Right ventricle myocardium superior (tissue), 1 donor: ENCODE measurements at regions of chr19 and their contacts with region 1.

Region 1: GRCh38 chr19:2543463-2544442 is 67.8 kb downstream of the GADD45B start:
- DNase-seq: peak; percentile 96
- ATAC-seq: peak; percentile 75

Region 2: GRCh38 chr19:2261438-2262172 is 282.1 kb before region 1 on chr19:
- intact Hi-C with region 1: no loop called
- DNase-seq: no peak
- ATAC-seq: no peak

Region 3: DNA sequence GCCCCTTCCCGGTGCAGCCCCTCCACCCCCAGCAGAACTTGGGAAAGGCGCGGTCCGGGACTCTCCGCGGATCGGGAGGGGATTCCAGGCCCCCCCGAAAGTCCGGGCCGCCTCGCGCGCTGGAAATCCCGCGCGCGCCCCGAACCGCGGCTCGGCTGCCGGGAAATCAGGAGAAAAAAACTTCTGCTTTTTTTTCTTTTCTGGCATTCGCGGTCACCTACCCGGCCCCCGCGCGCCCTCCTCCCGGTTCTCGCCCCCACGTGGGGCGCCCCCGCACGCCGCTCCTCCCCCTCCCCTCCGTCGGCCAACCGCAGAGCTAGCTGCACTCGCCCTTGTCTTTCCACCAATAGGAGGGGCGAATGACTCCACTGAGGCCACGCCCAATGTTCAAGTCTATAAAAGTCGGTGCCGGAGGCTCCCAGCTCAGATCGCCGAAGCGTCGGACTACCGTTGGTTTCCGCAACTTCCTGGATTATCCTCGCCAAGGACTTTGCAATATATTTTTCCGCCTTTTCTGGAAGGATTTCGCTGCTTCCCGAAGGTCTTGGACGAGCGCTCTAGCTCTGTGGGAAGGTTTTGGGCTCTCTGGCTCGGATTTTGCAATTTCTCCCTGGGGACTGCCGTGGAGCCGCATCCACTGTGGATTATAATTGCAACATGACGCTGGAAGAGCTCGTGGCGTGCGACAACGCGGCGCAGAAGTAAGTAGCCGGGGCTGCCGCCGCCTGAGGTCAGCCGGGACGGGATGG is 67.9 kb before region 1 on chr19 and contains the start of gene GADD45B:
- intact Hi-C with region 1: loop called (anchors 5 kb)
- DNase-seq: peak; percentile 98
- ATAC-seq: peak; percentile 81
- total RNA-seq, gene GADD45B: 42.1 TPM

Region 4: DNA sequence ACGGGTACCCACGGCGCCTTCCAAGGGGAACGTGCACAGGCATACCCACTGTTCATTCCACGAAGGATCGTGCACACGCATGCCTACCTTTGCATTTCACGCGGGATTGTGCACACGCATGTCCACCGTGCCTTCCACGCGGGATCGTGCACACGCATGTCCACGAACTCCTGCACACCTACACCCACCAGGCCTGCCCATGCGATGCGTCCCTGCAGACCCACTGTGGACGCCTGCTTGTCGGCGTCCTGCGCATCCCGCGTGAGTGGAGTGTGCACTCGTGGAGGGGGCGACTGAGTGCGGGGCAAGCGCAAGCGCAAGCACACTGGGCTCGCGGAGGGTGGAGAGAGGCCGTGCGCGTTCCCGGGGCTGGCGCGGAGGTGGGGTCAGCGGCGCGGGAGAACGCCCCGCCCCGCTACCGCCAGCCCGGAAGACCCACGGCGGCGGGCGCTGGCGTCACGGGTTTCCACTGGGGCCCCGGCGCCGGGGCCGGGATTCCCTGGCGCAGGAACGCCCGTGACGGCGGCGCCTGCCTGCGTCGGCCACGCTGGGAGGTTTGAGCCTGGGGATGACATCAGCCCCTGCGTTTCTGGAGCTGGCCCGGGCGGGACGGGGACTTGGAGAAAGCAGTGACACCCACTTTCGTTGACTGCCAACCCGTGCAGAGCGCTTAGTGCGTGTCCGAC is 49.2 kb before region 1 on chr19:
- intact Hi-C with region 1: loop called (anchors 5 kb)
- DNase-seq: peak; percentile 89
- ATAC-seq: peak; percentile 75

Region 5: DNA sequence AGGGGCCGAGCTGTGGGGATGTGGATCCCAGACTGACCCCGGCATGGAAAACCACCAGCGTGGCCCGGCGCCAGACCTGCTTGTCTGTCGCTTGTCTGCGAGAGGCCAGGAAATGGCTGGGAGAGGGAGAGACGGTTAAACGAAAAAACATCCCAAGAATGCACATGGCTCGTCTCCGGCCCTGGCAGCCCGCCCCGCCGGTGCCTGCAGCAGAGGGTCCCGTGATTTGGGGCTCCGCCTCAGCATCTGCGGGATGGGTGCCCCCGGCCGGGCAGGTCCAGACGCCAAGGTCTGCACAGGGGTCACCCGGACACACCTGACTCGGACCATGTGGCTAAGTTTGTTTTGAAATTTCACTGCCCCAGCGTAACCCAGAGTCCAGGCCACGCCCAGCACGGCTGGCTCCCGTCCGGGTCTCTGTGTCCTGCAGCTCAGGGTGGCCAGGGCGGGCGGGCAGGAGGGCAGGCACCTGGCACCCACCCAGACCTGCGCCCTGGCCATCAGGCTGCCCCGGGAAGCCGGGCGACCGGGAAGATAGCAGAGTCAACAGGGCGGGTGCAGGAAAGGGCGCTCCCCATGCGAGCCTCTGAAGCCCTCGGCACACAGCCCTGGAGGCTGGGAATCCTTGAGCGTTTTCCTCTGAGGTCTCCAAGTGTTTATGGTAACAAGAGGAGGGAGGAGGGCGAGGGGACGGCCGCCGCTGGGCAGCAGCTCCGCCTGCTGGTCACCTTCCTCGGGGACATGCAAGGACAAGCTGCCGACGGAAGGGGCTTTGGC is 35.3 kb after region 1 on chr19:
- intact Hi-C with region 1: loop called (anchors 5 kb)
- DNase-seq: peak; percentile 95
- ATAC-seq: peak; percentile 83